ENCODE measurements at regions of chr4 and their contacts with region 1.

Region 1: GRCh38 chr4:122151982-122152710 is at the start of gene BLTP1:
- DNase-seq: peak; percentile 71 to 94 (median 87)
- ATAC-seq: peak; percentile 92
- H3K4me3 ChIP-seq: peak within 1 kb of the TSS; percentile 93 to 96
- H3K4me3 Mint-ChIP-seq: peak within 1 kb of the TSS; percentile 96
- H3K27ac ChIP-seq: peak within 1 kb of the TSS; percentile 85 to 94
- H3K27ac Mint-ChIP-seq: peak within 1 kb of the TSS; percentile 97
- H3K4me1 ChIP-seq: peaks cover 36% of the 10 kb centered on the region
- H3K4me1 Mint-ChIP-seq: peaks cover 66% of the 10 kb centered on the region
- H3K27me3 ChIP-seq: no peaks in the 10 kb centered on the region
- H3K27me3 Mint-ChIP-seq: no peaks in the 10 kb centered on the region
- CTCF ChIP-seq: no peak
- total RNA-seq, gene BLTP1: 75.4 to 80.5 TPM

Region 2: DNA sequence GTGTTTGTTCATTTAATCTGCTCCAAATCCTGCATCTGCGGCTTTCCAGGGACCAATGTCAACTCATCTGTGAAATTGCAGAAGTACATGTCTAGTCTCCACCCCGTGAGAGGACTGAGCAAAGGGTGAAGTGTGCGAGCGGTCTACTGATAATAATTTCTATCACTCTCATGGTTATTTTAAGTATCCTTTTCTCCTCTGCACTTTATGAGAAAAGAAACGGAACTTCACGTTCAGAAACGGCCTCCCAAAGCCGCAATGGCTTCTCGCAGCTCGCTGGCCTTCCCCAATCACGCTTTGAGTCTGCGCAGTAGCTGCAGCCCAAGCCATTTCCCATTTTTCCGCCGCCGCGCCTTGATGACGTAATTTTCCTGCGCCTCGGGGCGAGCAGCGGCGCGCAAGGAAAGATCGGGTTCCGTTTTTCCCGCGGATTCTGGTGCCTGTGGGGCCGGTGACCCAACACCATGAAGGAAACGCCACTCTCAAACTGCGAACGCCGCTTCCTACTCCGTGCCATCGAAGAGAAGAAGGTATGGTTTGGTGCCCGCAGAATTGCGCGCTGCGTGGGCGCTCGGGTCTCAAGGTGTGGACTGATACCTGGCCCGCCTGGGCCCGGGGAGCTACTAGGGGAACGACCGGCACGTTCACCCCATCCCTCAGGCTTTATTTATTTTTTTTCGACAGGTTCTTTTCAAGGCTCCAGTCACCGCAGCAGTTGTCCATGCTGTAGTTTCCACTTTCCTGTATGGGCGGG is 351.0 kb before region 1 on chr4 and contains the start of gene EXOSC9:
- CTCF ChIA-PET with region 1: no interaction called
- POLR2A ChIA-PET with region 1: no interaction called
- intact Hi-C with region 1: loop called (anchors 2 to 5 kb)
- DNase-seq: peak; percentile 91 to 98 (median 95)
- ATAC-seq: peak; percentile 83
- H3K4me3 ChIP-seq: peak within 1 kb of the TSS; percentile 83 to 88
- H3K4me3 Mint-ChIP-seq: peak within 1 kb of the TSS; percentile 89
- H3K27ac ChIP-seq: peak within 1 kb of the TSS; percentile 90 to 93
- H3K27ac Mint-ChIP-seq: peak within 1 kb of the TSS; percentile 99
- H3K4me1 ChIP-seq: peaks cover 31% of the 10 kb centered on the region
- H3K4me1 Mint-ChIP-seq: peaks cover 40% of the 10 kb centered on the region
- H3K27me3 ChIP-seq: no peaks in the 10 kb centered on the region
- H3K27me3 Mint-ChIP-seq: no peaks in the 10 kb centered on the region
- CTCF ChIP-seq: no peak
- total RNA-seq, gene EXOSC9: 76.9 to 80.5 TPM

Region 3: GRCh38 chr4:121869841-121870656 is 282.1 kb before region 1 on chr4 and contains the start of gene BBS7:
- CTCF ChIA-PET with region 1: no interaction called
- POLR2A ChIA-PET with region 1: no interaction called
- intact Hi-C with region 1: loop called (anchors 1 to 5 kb)
- DNase-seq: peak; percentile 91 to 98 (median 96)
- ATAC-seq: peak; percentile 99
- H3K4me3 ChIP-seq: peak within 1 kb of the TSS; percentile 88 to 92
- H3K4me3 Mint-ChIP-seq: peak within 1 kb of the TSS; percentile 97
- H3K27ac ChIP-seq: peak within 1 kb of the TSS; percentile 74 to 79
- H3K27ac Mint-ChIP-seq: peak within 1 kb of the TSS; percentile 92
- H3K4me1 ChIP-seq: peaks cover 6% of the 10 kb centered on the region
- H3K4me1 Mint-ChIP-seq: peaks cover 14% of the 10 kb centered on the region
- H3K27me3 ChIP-seq: no peaks in the 10 kb centered on the region
- H3K27me3 Mint-ChIP-seq: peaks cover 7% of the 10 kb centered on the region
- CTCF ChIP-seq: no peak
- total RNA-seq, gene BBS7: 3.4 to 4.7 TPM

Region 4: DNA sequence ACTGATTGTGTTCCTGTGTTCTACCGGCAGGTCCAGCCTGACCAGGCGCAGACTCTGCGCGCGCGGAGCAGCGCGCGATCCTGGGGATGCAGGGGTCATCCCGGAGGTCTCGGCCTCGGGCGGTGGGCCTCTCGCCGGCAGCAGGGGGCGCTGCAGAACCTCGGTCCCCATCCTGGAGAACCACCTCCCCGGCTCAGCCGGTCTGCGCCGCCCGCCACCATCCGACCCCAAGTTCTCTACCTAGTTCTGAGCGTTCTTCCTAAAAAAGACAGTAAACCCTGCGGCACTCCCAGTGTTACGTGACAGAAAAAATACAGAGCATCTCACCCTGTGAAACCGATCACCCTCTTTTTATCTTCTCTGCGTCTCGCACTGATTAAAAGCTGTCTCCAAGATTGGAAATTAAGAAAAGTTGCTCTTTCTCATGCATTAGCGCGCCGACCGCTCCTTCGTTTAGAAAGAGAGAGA is 201.9 kb before region 1 on chr4:
- CTCF ChIA-PET with region 1: no interaction called
- POLR2A ChIA-PET with region 1: no interaction called
- intact Hi-C with region 1: loop called (anchors 1 to 10 kb)
- DNase-seq: peak; percentile 74 to 91 (median 85)
- ATAC-seq: peak; percentile 84
- H3K4me3 ChIP-seq: peak overlapping the region; percentile 65 to 71
- H3K4me3 Mint-ChIP-seq: peak overlapping the region; percentile 88
- H3K27ac ChIP-seq: peak overlapping the region in 1 of 2 experiments; percentile 34
- H3K27ac Mint-ChIP-seq: no peak overlapping the region
- H3K4me1 ChIP-seq: peaks cover 3% of the 10 kb centered on the region
- H3K4me1 Mint-ChIP-seq: peaks cover 8% of the 10 kb centered on the region
- H3K27me3 ChIP-seq: peaks cover 7 to 8% of the 10 kb centered on the region in 2 experiments
- H3K27me3 Mint-ChIP-seq: peaks cover 51% of the 10 kb centered on the region
- CTCF ChIP-seq: peak; percentile 86

Region 5: DNA sequence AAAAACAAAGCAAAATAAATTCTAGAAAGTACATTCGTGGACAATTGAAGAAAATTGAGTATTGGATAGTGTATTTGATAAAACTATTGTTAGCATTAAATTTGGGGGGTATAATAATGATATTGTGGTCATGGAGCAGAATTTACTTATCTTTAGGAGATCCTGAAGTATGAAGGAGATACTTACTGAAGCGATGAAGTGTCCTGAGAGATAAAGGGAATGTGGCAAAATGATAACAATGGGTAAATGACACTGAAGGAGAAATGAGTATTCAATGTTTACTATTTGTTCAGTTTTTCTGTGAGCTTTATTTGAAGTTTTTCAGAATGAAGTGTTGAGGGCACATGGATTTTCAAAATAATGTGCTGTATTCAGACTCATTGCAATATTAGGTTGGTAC is 30.1 kb before region 1 on chr4:
- CTCF ChIA-PET with region 1: no interaction called
- POLR2A ChIA-PET with region 1: no interaction called
- intact Hi-C with region 1: no loop called
- DNase-seq: no peak
- ATAC-seq: no peak
- H3K4me3 ChIP-seq: no peak overlapping the region
- H3K4me3 Mint-ChIP-seq: no peak overlapping the region
- H3K27ac ChIP-seq: no peak overlapping the region
- H3K27ac Mint-ChIP-seq: no peak overlapping the region
- H3K4me1 ChIP-seq: peaks cover 10% of the 10 kb centered on the region
- H3K4me1 Mint-ChIP-seq: peaks cover 12% of the 10 kb centered on the region
- H3K27me3 ChIP-seq: no peaks in the 10 kb centered on the region
- H3K27me3 Mint-ChIP-seq: peaks cover 2% of the 10 kb centered on the region
- CTCF ChIP-seq: no peak

Region 6: GRCh38 chr4:122218762-122219161 is 66.6 kb after region 1 on chr4:
- CTCF ChIA-PET with region 1: no interaction called
- POLR2A ChIA-PET with region 1: no interaction called
- intact Hi-C with region 1: no loop called
- DNase-seq: peak in 2 of 9 experiments; percentile 4 to 27
- ATAC-seq: peak; percentile 45
- H3K4me3 ChIP-seq: no peak overlapping the region
- H3K4me3 Mint-ChIP-seq: no peak overlapping the region
- H3K27ac ChIP-seq: no peak overlapping the region
- H3K27ac Mint-ChIP-seq: no peak overlapping the region
- H3K4me1 ChIP-seq: no peaks in the 10 kb centered on the region
- H3K4me1 Mint-ChIP-seq: peaks cover 14% of the 10 kb centered on the region
- H3K27me3 ChIP-seq: no peaks in the 10 kb centered on the region
- H3K27me3 Mint-ChIP-seq: no peaks in the 10 kb centered on the region
- CTCF ChIP-seq: peak; percentile 23

Region 7: GRCh38 chr4:122732329-122733026 is 580.3 kb after region 1 on chr4 and contains the start of gene BBS12:
- CTCF ChIA-PET with region 1: no interaction called
- POLR2A ChIA-PET with region 1: no interaction called
- intact Hi-C with region 1: loop called (anchors 1 to 5 kb)
- DNase-seq: peak; percentile 98 to 99 (median 99)
- ATAC-seq: peak; percentile 97
- H3K4me3 ChIP-seq: peak within 1 kb of the TSS; percentile 57 to 94
- H3K4me3 Mint-ChIP-seq: peak within 1 kb of the TSS; percentile 99
- H3K27ac ChIP-seq: peak within 1 kb of the TSS; percentile 81 to 95
- H3K27ac Mint-ChIP-seq: peak within 1 kb of the TSS; percentile 97
- H3K4me1 ChIP-seq: peaks cover 13% of the 10 kb centered on the region
- H3K4me1 Mint-ChIP-seq: peaks cover 18% of the 10 kb centered on the region
- H3K27me3 ChIP-seq: no peaks in the 10 kb centered on the region
- H3K27me3 Mint-ChIP-seq: no peaks in the 10 kb centered on the region
- CTCF ChIP-seq: no peak
- total RNA-seq, gene BBS12: 0.56 to 0.98 TPM